A549 (cell line): ENCODE measurements at regions of chr13 and their contacts with region 1.

Region 1: DNA sequence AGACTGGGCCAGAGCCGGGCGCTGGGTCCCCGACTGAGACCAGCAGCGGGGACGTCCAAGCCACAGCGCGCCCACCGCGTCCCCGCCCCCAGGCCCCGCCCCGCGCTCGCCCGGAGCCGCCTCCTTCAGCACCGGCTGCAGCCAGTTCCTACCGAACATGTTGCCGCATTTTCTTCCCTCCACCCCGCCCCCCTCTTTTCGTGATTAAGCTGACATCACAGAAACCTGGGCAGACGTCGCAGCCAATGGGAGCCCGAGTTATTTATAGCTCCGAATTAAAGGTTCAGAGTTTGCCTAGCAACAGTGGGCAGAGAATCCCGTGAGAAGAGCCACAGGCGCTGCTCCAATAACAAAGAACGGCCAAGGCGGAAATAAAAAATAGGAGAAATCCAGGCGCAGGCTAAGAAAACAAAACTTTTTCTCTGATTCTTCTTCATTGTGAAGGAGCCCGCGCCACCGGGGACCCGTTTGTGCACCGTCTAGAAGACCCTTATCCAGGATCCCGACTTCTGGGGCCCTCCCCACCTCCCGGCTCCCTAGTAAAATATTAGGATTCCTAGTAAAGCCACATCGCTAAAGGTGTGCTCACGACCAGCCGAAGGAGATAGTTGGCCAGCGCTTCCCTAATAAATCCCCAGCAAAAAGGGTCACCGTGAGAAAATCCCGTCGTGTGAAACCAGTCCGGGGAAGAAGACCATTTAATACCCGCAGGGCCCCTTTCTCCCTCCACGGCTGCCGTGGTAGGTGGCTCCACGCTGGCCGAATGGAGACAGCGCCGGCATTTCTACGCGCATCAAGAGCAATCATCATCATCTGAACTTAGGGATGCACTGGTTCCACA is 61.7 kb downstream of the SERP2 start:
- DNase-seq: peak; percentile 69 to 94
- ATAC-seq: peak; percentile 64 to 68
- H3K4me3 ChIP-seq: peak overlapping the region; percentile 91
- H3K27ac ChIP-seq: peak overlapping the region; percentile 94 to 97
- H3K4me1 ChIP-seq: peaks cover 43% of the 10 kb centered on the region
- CTCF ChIP-seq: no peak
- EP300 ChIP-seq: no peak
- POLR2A ChIP-seq: peak; percentile 26; the same call in 1 of the 2 replicates
- RAD21 ChIP-seq: peak in 1 of 2 experiments; percentile 1; a peak in 1 of 5 replicates

Region 2: DNA sequence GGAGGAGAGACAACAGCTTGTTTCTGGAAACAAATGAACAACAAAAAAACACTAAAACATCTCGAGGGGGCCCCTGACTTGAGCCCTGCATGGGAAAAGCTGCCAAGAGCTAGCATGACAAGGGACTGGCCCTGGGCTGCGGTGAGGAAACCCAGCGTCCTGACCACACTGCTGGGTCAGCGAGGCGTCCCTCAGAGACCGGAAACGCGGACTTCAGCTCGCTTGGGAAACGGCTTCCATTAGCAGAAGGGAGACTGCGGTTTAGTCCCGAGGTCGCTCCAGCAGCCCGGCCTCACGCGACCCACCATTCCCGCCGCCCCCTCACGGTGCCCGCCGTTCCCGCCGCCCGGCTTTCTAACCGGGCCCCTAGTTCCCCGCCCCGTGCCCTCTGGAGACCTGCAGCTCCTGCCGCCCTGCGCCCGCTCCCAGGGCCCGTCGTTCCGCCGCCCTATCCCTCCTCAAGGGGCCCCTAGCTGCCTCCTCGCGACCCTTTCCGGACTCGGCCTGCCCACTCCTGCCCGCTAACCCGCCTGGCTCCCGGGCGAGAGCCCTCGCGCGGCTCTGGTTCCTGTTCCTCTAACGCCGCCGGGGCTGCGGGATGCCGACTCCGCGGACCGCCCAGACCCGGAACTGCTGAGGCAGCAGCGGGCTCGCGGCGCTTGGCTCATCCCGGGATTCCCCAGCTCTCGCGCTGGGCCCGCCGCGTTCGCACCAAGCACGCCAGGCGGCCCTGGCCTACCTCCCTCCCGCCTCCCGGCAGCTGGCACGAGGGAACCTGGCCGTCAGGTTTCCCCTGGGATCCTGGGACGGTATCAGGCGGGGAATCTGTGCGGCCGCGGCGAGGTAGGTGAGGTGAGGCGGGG is 556.2 kb before region 1 on chr13 and contains the start of gene CCDC122:
- CTCF ChIA-PET with region 1: no interaction called
- POLR2A ChIA-PET with region 1: interaction called, 13 read pairs
- DNase-seq: peak; percentile 66 to 75
- ATAC-seq: peak; percentile 96 to 97
- H3K4me3 ChIP-seq: peak within 1 kb of the TSS; percentile 80
- H3K27ac ChIP-seq: peak within 1 kb of the TSS; percentile 95 to 96
- H3K4me1 ChIP-seq: peaks cover 11% of the 10 kb centered on the region; the same call in 2 of the 3 replicates
- CTCF ChIP-seq: no peak
- EP300 ChIP-seq: no peak
- POLR2A ChIP-seq: peak; percentile 52
- RAD21 ChIP-seq: no peak
- polyA plus RNA-seq, gene CCDC122: 2.6 and 2.7 TPM in 2 replicates

Region 3: GRCh38 chr13:44141725-44142539 is 293.4 kb before region 1 on chr13:
- CTCF ChIA-PET with region 1: interaction called, 3 read pairs
- POLR2A ChIA-PET with region 1: interaction called, 26 read pairs
- DNase-seq: peak; percentile 83 to 96
- ATAC-seq: peak; percentile 98 to 99
- H3K4me3 ChIP-seq: peak overlapping the region; percentile 63
- H3K27ac ChIP-seq: peak overlapping the region; percentile 98 to 99
- H3K4me1 ChIP-seq: peaks cover 25% of the 10 kb centered on the region
- CTCF ChIP-seq: no peak
- EP300 ChIP-seq: no peak
- POLR2A ChIP-seq: peak; percentile 74
- RAD21 ChIP-seq: peak in 1 of 2 experiments; percentile 35; a peak in 1 of 5 replicates

Region 4: GRCh38 chr13:44231786-44232516 is 203.4 kb before region 1 on chr13:
- CTCF ChIA-PET with region 1: interaction called, 4 read pairs
- POLR2A ChIA-PET with region 1: interaction called, 12 read pairs
- DNase-seq: peak; percentile 84 to 96
- ATAC-seq: peak; percentile 98 to 99
- H3K4me3 ChIP-seq: no peak overlapping the region
- H3K27ac ChIP-seq: peak overlapping the region; percentile 90 to 97
- H3K4me1 ChIP-seq: peaks cover 54% of the 10 kb centered on the region
- CTCF ChIP-seq: no peak
- EP300 ChIP-seq: peak; percentile 91 to 94; a peak in 4 of 5 replicates
- POLR2A ChIP-seq: no peak
- RAD21 ChIP-seq: peak; percentile 41 to 64; a peak in 4 of 5 replicates

Region 5: GRCh38 chr13:44300895-44301638 is 134.3 kb before region 1 on chr13:
- CTCF ChIA-PET with region 1: interaction called, 6 read pairs
- POLR2A ChIA-PET with region 1: interaction called, 80 read pairs
- DNase-seq: peak; percentile 61 to 76
- ATAC-seq: peak; percentile 91 to 93
- H3K4me3 ChIP-seq: no peak overlapping the region
- H3K27ac ChIP-seq: peak overlapping the region; percentile 93 to 97
- H3K4me1 ChIP-seq: peaks cover 55% of the 10 kb centered on the region
- CTCF ChIP-seq: no peak
- EP300 ChIP-seq: peak in 1 of 2 experiments; percentile 61; a peak in 1 of 5 replicates
- POLR2A ChIP-seq: no peak
- RAD21 ChIP-seq: peak; percentile 16 to 18; a peak in 2 of 5 replicates

Region 6: GRCh38 chr13:44373601-44374348 is 61.6 kb before region 1 on chr13 and contains the start of gene SERP2:
- CTCF ChIA-PET with region 1: no interaction called
- POLR2A ChIA-PET with region 1: no interaction called
- DNase-seq: no peak
- ATAC-seq: no peak
- H3K4me3 ChIP-seq: no peak within 1 kb of the TSS
- H3K27ac ChIP-seq: no peak within 1 kb of the TSS
- H3K4me1 ChIP-seq: peaks cover 15% of the 10 kb centered on the region; the same call in 2 of the 3 replicates
- CTCF ChIP-seq: no peak
- EP300 ChIP-seq: no peak
- POLR2A ChIP-seq: no peak
- RAD21 ChIP-seq: no peak
- polyA plus RNA-seq, gene SERP2: not detected in 2 replicates